Mammary epithelial cell (primary cell): ENCODE measurements at regions of chr3 and their contacts with region 1.

Region 1: GRCh38 chr3:50272911-50273693 is 4.2 kb downstream of the SEMA3B start:
- DNase-seq: peak; percentile 74
- H3K4me3 ChIP-seq: peak overlapping the region; percentile 3 to 47 (median 41)
- H3K27ac ChIP-seq: no peak overlapping the region
- H3K4me1 ChIP-seq: peaks cover 38% of the 10 kb centered on the region
- H3K27me3 ChIP-seq: no peaks in the 10 kb centered on the region
- CTCF ChIP-seq: peak; percentile 98

Region 2: GRCh38 chr3:50078622-50079021 is 194.5 kb before region 1 on chr3:
- CTCF ChIA-PET with region 1: no interaction called
- dilution Hi-C with region 1: no loop called
- in situ Hi-C with region 1: no loop called
- intact Hi-C with region 1: no loop called
- DNase-seq: peak; percentile 25
- H3K4me3 ChIP-seq: no peak overlapping the region
- H3K27ac ChIP-seq: no peak overlapping the region
- H3K4me1 ChIP-seq: no peaks in the 10 kb centered on the region
- H3K27me3 ChIP-seq: no peaks in the 10 kb centered on the region
- CTCF ChIP-seq: no peak

Region 3: GRCh38 chr3:50121416-50122032 is 151.6 kb before region 1 on chr3:
- CTCF ChIA-PET with region 1: no interaction called
- dilution Hi-C with region 1: no loop called
- in situ Hi-C with region 1: no loop called
- intact Hi-C with region 1: loop called (anchors 5 kb)
- DNase-seq: peak; percentile 60
- H3K4me3 ChIP-seq: no peak overlapping the region
- H3K27ac ChIP-seq: no peak overlapping the region
- H3K4me1 ChIP-seq: peaks cover 13% of the 10 kb centered on the region
- H3K27me3 ChIP-seq: no peaks in the 10 kb centered on the region
- CTCF ChIP-seq: peak; percentile 74 to 84

Region 4: GRCh38 chr3:50192689-50193141 is 80.4 kb before region 1 on chr3:
- CTCF ChIA-PET with region 1: no interaction called
- dilution Hi-C with region 1: loop called (anchors 5 kb)
- in situ Hi-C with region 1: loop called (anchors 5 kb)
- intact Hi-C with region 1: loop called (anchors 1 kb)
- DNase-seq: peak; percentile 46
- H3K4me3 ChIP-seq: no peak overlapping the region
- H3K27ac ChIP-seq: no peak overlapping the region
- H3K4me1 ChIP-seq: peaks cover 7% of the 10 kb centered on the region
- H3K27me3 ChIP-seq: peaks cover 2% of the 10 kb centered on the region
- CTCF ChIP-seq: peak; percentile 90 to 91

Region 5: GRCh38 chr3:50227390-50228183 is 45.5 kb before region 1 on chr3:
- CTCF ChIA-PET with region 1: no interaction called
- dilution Hi-C with region 1: loop called (anchors 5 kb)
- in situ Hi-C with region 1: loop called (anchors 5 kb)
- intact Hi-C with region 1: loop called (anchors 1 kb)
- DNase-seq: peak; percentile 96
- H3K4me3 ChIP-seq: peak overlapping the region; percentile 58 to 60 (median 59)
- H3K27ac ChIP-seq: peak overlapping the region; percentile 52
- H3K4me1 ChIP-seq: peaks cover 20% of the 10 kb centered on the region
- H3K27me3 ChIP-seq: no peaks in the 10 kb centered on the region
- CTCF ChIP-seq: peak; percentile 43 to 74

Region 6: DNA sequence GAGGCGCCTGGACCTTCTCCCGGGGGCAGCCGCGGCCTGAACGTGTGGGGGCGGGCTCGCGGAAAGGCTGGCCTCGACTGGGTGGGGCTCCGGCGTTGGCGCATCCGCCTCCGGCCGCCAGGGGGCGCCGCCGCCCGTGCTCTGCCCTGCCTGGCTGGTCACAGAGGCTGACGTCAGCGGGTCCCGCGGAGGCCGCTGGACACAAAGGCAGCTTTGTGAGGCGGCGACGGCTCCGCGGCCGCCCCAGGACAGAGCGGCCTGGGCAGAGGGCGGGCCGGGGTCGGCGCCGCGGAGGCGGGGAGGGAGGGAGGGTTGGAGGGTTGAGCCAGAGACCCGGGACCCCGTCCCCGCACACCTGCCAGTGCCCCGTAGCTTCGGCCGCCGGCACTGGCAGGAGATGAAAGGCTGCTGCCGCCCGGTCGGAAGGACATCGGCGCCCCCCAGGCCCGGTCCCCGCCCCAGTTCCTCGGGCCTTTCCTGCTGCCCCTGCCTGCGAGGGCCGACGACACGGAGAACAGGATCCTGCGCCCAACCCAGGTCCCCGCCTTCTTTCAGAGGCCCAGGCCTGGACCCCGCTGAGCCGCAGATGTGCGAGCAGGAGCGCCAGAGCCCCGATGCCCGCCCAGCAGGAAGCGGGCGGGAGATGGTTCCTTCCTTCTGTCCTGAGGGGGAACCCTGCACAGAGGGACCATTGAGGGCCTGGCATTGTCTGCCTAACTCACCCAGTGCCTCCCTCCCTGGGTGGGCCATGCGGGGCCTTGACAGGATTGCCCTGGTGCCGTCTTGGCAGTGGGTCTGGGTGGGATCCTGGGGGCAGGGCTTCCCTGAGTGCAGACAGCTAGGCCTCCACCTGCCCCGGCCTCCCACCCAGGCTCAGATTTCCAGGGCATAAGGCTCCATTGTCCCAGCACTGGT is 12.8 kb before region 1 on chr3:
- CTCF ChIA-PET with region 1: interaction called, 18 read pairs
- dilution Hi-C with region 1: no loop called
- in situ Hi-C with region 1: no loop called
- intact Hi-C with region 1: loop called (anchors 1 kb)
- DNase-seq: peak; percentile 86
- H3K4me3 ChIP-seq: peak overlapping the region; percentile 32 to 52 (median 41)
- H3K27ac ChIP-seq: peak overlapping the region; percentile 54
- H3K4me1 ChIP-seq: peaks cover 35% of the 10 kb centered on the region
- H3K27me3 ChIP-seq: no peaks in the 10 kb centered on the region
- CTCF ChIP-seq: peak; percentile 77 to 91

Region 7: GRCh38 chr3:50327943-50328691 is 55.0 kb after region 1 on chr3 and contains the start of gene TUSC2:
- CTCF ChIA-PET with region 1: no interaction called
- dilution Hi-C with region 1: loop called (anchors 5 kb)
- in situ Hi-C with region 1: loop called in 1 of 2 experiments (anchors 10 kb)
- intact Hi-C with region 1: loop called (anchors 1 kb)
- DNase-seq: peak; percentile 96
- H3K4me3 ChIP-seq: peak within 1 kb of the TSS; percentile 83 to 96 (median 92)
- H3K27ac ChIP-seq: peak within 1 kb of the TSS; percentile 55
- H3K4me1 ChIP-seq: peaks cover 17% of the 10 kb centered on the region
- H3K27me3 ChIP-seq: no peaks in the 10 kb centered on the region
- CTCF ChIP-seq: no peak
- total RNA-seq, gene TUSC2: 22.0 to 22.4 TPM